ENCODE measurements at regions of chr12 and their contacts with region 1.

Region 1: DNA sequence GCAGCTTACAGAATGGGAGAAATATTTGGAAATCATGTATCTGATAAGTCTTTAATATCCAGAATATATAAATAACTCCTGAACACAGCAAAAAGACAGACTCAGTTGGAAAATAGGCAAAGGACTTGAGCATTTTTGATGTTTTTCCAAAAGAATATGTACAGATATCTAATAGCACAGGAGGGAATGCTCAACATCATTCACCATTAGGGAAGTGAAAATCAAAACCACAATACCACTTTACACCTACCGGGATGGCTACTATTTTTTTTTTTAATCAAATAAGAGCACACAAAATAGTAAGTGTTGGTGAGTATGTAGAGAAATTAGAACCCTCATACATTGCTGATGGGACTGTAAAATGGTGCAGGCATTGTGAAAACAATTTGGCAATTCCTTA is 75.6 kb downstream of the ANO6 start:
- DNase-seq: no peak

Region 2: GRCh38 chr12:45279931-45280830 is 11.3 kb before region 1 on chr12:
- intact Hi-C with region 1: loop called in 1 of 2 experiments (anchors 1 kb)
- DNase-seq: no peak

Measured in posterior vena cava (tissue), 2 donors.